PC-3 (cell line): ENCODE measurements at regions of chr11 and their contacts with region 1.

Region 1: GRCh38 chr11:70270104-70270876 is at the start of gene PPFIA1:
- DNase-seq: peak; percentile 99
- ATAC-seq: peak; percentile 92
- H3K4me3 ChIP-seq: peak within 1 kb of the TSS; percentile 92
- H3K27ac ChIP-seq: peak within 1 kb of the TSS; percentile 42
- H3K4me1 ChIP-seq: peaks cover 23% of the 10 kb centered on the region
- H3K27me3 ChIP-seq: no peaks in the 10 kb centered on the region
- CTCF ChIP-seq: 0 out of 2 replicates have a peak, but pooled peaks have one; percentile 18
- total RNA-seq, gene PPFIA1: 57.5 and 71.1 TPM in 2 replicates

Region 2: DNA sequence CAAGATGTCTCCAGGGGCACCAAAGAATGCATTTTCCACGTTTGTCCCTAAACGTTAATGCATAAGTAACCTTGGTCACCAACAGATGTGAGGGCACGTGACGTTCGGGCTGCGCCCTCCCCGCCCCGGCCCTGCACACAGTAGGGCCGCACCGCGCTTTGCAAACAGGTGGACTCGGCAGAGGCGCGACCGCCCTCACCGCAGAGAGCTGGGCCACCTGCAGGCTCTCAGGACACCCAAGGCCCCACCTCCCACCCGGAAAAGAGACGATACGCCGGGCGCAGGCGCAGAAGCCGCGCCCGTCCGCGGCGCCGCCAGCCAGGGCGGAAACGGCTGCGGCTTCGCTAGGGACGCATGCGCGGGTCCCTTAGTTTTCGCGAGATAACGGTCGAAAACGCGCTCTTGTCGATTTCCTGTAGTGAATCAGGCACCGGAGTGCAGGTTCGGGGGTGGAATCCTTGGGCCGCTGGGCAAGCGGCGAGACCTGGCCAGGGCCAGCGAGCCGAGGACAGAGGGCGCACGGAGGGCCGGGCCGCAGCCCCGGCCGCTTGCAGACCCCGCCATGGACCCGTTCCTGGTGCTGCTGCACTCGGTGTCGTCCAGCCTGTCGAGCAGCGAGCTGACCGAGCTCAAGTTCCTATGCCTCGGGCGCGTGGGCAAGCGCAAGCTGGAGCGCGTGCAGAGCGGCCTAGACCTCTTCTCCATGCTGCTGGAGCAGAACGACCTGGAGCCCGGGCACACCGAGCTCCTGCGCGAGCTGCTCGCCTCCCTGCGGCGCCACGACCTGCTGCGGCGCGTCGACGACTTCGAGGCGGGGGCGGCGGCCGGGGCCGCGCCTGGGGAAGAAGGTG is 67.2 kb before region 1 on chr11 and contains the start of gene FADD:
- CTCF ChIA-PET with region 1: no interaction called
- POLR2A ChIA-PET with region 1: no interaction called
- intact Hi-C with region 1: loop called (anchors 1 kb)
- DNase-seq: peak; percentile 99
- ATAC-seq: peak; percentile 75
- H3K4me3 ChIP-seq: peak within 1 kb of the TSS; percentile 76
- H3K27ac ChIP-seq: peak within 1 kb of the TSS; percentile 96
- H3K4me1 ChIP-seq: peaks cover 22% of the 10 kb centered on the region
- H3K27me3 ChIP-seq: no peaks in the 10 kb centered on the region
- CTCF ChIP-seq: no peak
- total RNA-seq, gene FADD: 79.5 and 93.9 TPM in 2 replicates

Region 3: GRCh38 chr11:70212227-70212811 is 58.0 kb before region 1 on chr11:
- CTCF ChIA-PET with region 1: no interaction called
- POLR2A ChIA-PET with region 1: no interaction called
- intact Hi-C with region 1: loop called (anchors 2 kb)
- DNase-seq: peak; percentile 50
- ATAC-seq: peak; percentile 37
- H3K4me3 ChIP-seq: peak overlapping the region; percentile 29; the same call in 1 of the 2 replicates
- H3K27ac ChIP-seq: no peak overlapping the region
- H3K4me1 ChIP-seq: peaks cover 22% of the 10 kb centered on the region
- H3K27me3 ChIP-seq: no peaks in the 10 kb centered on the region
- CTCF ChIP-seq: no peak

Region 4: GRCh38 chr11:70233034-70233995 is 37.0 kb before region 1 on chr11:
- CTCF ChIA-PET with region 1: no interaction called
- POLR2A ChIA-PET with region 1: no interaction called
- intact Hi-C with region 1: loop called (anchors 1 kb)
- DNase-seq: peak; percentile 100
- ATAC-seq: peak; percentile 95
- H3K4me3 ChIP-seq: no peak overlapping the region
- H3K27ac ChIP-seq: peak overlapping the region; percentile 86
- H3K4me1 ChIP-seq: peaks cover 14% of the 10 kb centered on the region
- H3K27me3 ChIP-seq: no peaks in the 10 kb centered on the region
- CTCF ChIP-seq: no peak

Region 5: GRCh38 chr11:70307176-70307575 is 36.9 kb after region 1 on chr11:
- CTCF ChIA-PET with region 1: no interaction called
- POLR2A ChIA-PET with region 1: no interaction called
- intact Hi-C with region 1: loop called (anchors 2 kb)
- DNase-seq: peak; percentile 71
- ATAC-seq: peak; percentile 68
- H3K4me3 ChIP-seq: no peak overlapping the region; the same call in 1 of the 2 replicates
- H3K27ac ChIP-seq: peak overlapping the region; percentile 69
- H3K4me1 ChIP-seq: peaks cover 35% of the 10 kb centered on the region
- H3K27me3 ChIP-seq: no peaks in the 10 kb centered on the region
- CTCF ChIP-seq: no peak